ENCODE measurements at regions of chr15 and their contacts with region 1.

Region 1: DNA sequence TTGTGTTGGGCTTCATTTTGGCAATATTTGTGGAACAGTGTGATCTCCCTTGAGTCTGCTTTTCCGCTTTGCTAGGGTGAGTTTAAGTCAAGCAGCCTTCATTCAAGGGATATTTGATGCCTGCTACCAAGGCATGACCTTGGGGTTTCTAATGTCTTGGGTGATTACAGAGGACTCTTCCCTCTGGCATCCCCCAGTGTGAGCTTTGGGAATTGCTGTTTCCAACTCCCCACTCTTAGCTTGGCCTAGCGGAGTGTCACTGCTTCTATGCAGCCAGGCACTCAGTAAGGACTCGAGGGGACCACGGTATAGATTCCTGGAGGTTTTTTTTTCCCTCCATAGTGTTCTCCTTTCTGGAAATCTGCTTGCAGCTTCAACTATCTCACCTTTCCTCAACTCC is 21.1 kb downstream of the GCNT3 start:
- DNase-seq: peak; percentile 64
- ATAC-seq: peak; percentile 100
- H3K4me3 Mint-ChIP-seq: no peak overlapping the region
- H3K27ac Mint-ChIP-seq: no peak overlapping the region
- H3K4me1 Mint-ChIP-seq: peaks cover 3% of the 10 kb centered on the region
- H3K27me3 Mint-ChIP-seq: no peaks in the 10 kb centered on the region
- CTCF ChIP-seq: no peak

Region 2: GRCh38 chr15:59656897-59657634 is 24.4 kb after region 1 on chr15 and contains the start of gene GTF2A2:
- CTCF ChIA-PET with region 1: interaction called, 10 read pairs
- POLR2A ChIA-PET with region 1: no interaction called
- DNase-seq: peak; percentile 95
- ATAC-seq: peak; percentile 100
- H3K4me3 Mint-ChIP-seq: no peak within 1 kb of the TSS
- H3K27ac Mint-ChIP-seq: peak within 1 kb of the TSS; percentile 64
- H3K4me1 Mint-ChIP-seq: no peaks in the 10 kb centered on the region
- H3K27me3 Mint-ChIP-seq: no peaks in the 10 kb centered on the region
- CTCF ChIP-seq: no peak
- total RNA-seq, gene GTF2A2: 120 to 130 TPM (median 129 TPM) in 3 replicates

Region 3: GRCh38 chr15:59751552-59752413 is 119.1 kb after region 1 on chr15:
- CTCF ChIA-PET with region 1: no interaction called
- POLR2A ChIA-PET with region 1: no interaction called
- DNase-seq: no peak
- ATAC-seq: peak; percentile 100
- H3K4me3 Mint-ChIP-seq: no peak overlapping the region
- H3K27ac Mint-ChIP-seq: no peak overlapping the region
- H3K4me1 Mint-ChIP-seq: no peaks in the 10 kb centered on the region; the same call in none of the 2 replicates
- H3K27me3 Mint-ChIP-seq: no peaks in the 10 kb centered on the region
- CTCF ChIP-seq: peak; percentile 30; the same call in 1 of the 2 replicates

Region 4: GRCh38 chr15:60017538-60018520 is 385.1 kb after region 1 on chr15:
- CTCF ChIA-PET with region 1: no interaction called
- POLR2A ChIA-PET with region 1: no interaction called
- DNase-seq: no peak
- ATAC-seq: no peak
- H3K4me3 Mint-ChIP-seq: no peak overlapping the region
- H3K27ac Mint-ChIP-seq: no peak overlapping the region
- H3K4me1 Mint-ChIP-seq: peaks cover 40% of the 10 kb centered on the region
- H3K27me3 Mint-ChIP-seq: no peaks in the 10 kb centered on the region; the same call in 1 of the 2 replicates
- CTCF ChIP-seq: no peak